Activated CD8-positive, alpha-beta T cell treated with anti-CD3 and anti-CD28 coated beads for 36 hours (primary cell): ENCODE measurements at regions of chr7 and their contacts with region 1.

Region 1: DNA sequence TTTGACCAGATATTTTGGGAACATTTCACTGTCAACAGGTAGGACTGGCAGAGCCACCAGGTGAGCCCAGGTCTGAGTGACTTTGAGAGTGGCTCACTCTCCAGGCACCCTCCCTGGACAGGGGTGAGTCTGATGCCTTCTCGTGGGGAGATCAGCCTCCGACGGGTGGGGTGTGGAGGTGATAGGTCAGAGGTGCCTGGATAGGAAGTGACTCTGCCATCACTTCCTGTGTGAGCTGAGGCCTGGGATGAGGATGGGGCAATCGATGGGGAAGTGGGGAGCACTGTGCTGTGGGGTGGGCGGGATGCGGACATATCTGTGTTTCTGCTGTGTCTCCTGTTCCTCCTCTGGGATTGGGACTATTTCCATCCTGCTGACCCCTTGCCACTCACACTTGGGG is 34.6 kb downstream of the IFT22 start:
- DNase-seq: no peak
- ATAC-seq: no peak
- H3K4me3 Mint-ChIP-seq: no peak overlapping the region
- H3K27ac Mint-ChIP-seq: no peak overlapping the region
- H3K4me1 Mint-ChIP-seq: peaks cover 25% of the 10 kb centered on the region
- H3K27me3 Mint-ChIP-seq: peaks cover 6% of the 10 kb centered on the region
- CTCF ChIP-seq: no peak

Region 2: GRCh38 chr7:101077303-101078089 is 209.5 kb before region 1 on chr7:
- CTCF ChIA-PET with region 1: no interaction called
- POLR2A ChIA-PET with region 1: no interaction called
- intact Hi-C with region 1: no loop called
- DNase-seq: peak; percentile 92
- ATAC-seq: peak; percentile 99
- H3K4me3 Mint-ChIP-seq: no peak overlapping the region
- H3K27ac Mint-ChIP-seq: no peak overlapping the region
- H3K4me1 Mint-ChIP-seq: peaks cover 7% of the 10 kb centered on the region
- H3K27me3 Mint-ChIP-seq: no peaks in the 10 kb centered on the region
- CTCF ChIP-seq: peak; percentile 86

Region 3: DNA sequence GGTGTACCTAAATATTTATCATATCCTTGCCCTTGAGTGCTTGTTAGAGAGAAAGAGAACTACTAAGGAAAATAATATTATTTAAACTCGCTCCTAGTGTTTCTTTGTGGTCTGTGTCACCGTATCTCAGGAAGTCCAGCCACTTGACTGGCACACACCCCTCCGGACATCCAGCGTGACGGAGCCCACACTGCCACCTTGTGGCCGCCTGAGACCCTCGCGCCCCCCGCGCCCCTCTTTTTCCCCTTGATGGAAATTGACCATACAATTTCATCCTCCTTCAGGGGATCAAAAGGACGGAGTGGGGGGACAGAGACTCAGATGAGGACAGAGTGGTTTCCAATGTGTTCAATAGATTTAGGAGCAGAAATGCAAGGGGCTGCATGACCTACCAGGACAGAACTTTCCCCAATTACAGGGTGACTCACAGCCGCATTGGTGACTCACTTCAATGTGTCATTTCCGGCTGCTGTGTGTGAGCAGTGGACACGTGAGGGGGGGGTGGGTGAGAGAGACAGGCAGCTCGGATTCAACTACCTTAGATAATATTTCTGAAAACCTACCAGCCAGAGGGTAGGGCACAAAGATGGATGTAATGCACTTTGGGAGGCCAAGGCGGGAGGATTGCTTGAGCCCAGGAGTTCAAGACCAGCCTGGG is 148.7 kb before region 1 on chr7:
- CTCF ChIA-PET with region 1: interaction called, 59 read pairs
- POLR2A ChIA-PET with region 1: no interaction called
- intact Hi-C with region 1: loop called (anchors 10 kb)
- DNase-seq: peak; percentile 97
- ATAC-seq: peak; percentile 88
- H3K4me3 Mint-ChIP-seq: peak overlapping the region; percentile 62
- H3K27ac Mint-ChIP-seq: peak overlapping the region; percentile 86
- H3K4me1 Mint-ChIP-seq: peaks cover 49% of the 10 kb centered on the region
- H3K27me3 Mint-ChIP-seq: peaks cover 9% of the 10 kb centered on the region
- CTCF ChIP-seq: peak; percentile 94

Region 4: DNA sequence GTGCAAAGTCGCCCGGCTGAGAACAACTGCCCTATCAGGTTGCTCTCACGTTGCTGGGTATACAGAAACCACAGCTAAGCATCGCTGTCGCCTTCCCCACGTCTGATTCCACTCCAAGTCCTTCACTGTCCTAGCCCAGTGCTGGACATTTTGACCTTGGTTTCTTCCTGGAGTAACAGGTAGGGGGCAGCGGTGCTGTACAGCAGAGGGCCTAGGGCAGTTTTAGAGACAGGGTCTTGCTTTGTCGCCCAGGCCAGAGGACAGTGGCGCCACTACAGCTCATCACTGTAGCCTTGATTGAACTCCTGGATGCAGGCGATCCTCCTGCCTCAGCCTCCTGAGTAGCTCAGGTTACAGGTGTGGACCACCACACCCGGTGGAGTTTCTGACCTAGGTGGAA is 52.0 kb before region 1 on chr7:
- CTCF ChIA-PET with region 1: interaction called, 5 read pairs
- POLR2A ChIA-PET with region 1: no interaction called
- intact Hi-C with region 1: loop called (anchors 10 kb)
- DNase-seq: no peak
- ATAC-seq: no peak
- H3K4me3 Mint-ChIP-seq: no peak overlapping the region
- H3K27ac Mint-ChIP-seq: no peak overlapping the region
- H3K4me1 Mint-ChIP-seq: no peaks in the 10 kb centered on the region
- H3K27me3 Mint-ChIP-seq: no peaks in the 10 kb centered on the region
- CTCF ChIP-seq: peak; percentile 38

Region 5: GRCh38 chr7:101251871-101252659 is 35.0 kb before region 1 on chr7:
- CTCF ChIA-PET with region 1: interaction called, 27 read pairs
- POLR2A ChIA-PET with region 1: interaction called, 4 read pairs
- intact Hi-C with region 1: no loop called
- DNase-seq: peak; percentile 100
- ATAC-seq: peak; percentile 100
- H3K4me3 Mint-ChIP-seq: peak overlapping the region; percentile 91
- H3K27ac Mint-ChIP-seq: peak overlapping the region; percentile 97
- H3K4me1 Mint-ChIP-seq: peaks cover 24% of the 10 kb centered on the region
- H3K27me3 Mint-ChIP-seq: no peaks in the 10 kb centered on the region
- CTCF ChIP-seq: no peak

Region 6: DNA sequence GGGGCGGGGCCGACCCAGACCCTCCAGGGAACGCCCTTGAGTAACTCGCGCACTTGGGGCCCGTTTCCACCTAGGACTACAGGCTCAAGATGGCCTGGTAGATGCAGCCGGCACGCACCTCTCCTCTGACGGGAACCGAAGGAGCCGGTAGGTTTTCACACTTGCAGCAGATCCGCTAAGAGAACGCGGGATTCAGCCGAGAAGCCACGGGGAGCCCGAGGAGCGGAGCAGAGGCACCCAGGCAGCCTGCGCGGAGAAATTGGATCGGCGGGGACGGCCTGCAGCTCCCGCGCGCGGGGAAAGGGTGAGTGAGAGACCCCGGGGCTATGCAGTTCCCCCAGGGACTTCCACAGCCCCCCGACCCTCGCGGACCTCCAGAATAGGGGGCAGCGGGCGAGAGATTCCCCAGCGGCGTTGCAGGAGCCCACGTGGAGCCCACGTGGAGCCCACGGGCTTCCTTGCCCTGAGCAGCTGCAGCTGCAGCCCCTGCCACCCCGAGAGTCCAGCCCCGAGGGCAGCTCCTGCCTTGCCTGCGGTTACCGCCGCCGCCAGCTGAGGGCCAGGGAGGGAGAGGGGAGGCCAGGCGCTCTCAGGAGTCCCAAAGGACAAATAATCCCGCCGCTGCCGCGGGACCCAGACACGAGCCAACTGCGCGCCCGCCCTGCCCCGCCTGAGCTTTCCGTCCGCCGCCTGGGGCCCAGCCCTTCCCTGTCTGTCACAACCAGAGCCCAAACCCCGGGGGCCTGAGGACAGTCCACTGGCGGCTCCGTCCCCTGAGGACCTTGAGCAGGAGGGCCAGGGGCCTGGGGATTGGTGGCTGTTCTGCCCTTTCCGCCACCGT is 21.4 kb after region 1 on chr7:
- CTCF ChIA-PET with region 1: interaction called, 10 read pairs
- POLR2A ChIA-PET with region 1: no interaction called
- intact Hi-C with region 1: no loop called
- DNase-seq: peak; percentile 72
- ATAC-seq: peak; percentile 92
- H3K4me3 Mint-ChIP-seq: peak overlapping the region; percentile 80
- H3K27ac Mint-ChIP-seq: peak overlapping the region; percentile 91
- H3K4me1 Mint-ChIP-seq: peaks cover 10% of the 10 kb centered on the region
- H3K27me3 Mint-ChIP-seq: peaks cover 18% of the 10 kb centered on the region
- CTCF ChIP-seq: no peak